ENCODE measurements at regions of chr11 and their contacts with region 1.

Region 1: DNA sequence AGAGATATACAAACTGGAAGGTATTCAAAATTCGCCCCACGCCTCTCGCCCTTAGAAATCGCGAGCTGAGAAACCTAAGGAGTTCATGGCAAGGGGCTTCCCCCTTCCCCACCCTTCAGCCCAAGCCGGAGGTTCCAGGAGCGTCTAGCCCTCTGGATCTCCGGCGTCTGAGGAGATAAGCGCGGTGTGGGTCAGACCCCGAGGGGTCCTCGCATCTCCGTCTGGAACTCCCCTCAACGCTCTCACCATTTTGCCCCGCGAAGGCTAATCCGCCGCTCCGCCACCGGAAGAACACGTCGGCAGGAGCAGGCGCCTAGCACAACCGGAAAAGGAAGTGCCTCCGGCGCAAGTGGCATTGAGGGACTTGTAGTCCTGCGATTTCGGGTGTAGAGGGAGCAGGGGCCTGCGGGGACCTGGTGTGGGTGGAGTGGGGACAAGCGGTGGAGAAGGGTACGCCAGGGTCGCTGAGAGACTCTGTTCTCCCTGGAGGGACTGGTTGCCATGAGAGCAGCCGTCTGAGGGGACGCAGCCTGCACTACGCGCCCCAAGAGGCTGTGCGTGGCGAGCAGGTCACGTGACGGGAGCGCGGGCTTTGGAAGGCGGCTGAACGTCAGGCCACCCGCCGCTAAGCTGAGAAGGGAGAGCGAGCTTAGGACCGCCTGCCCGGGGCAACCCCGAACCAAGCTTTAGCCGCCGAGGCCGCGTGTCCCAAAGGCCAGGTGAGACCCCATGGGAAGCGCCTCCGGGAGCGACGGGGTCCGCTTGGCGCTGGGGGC is at the starts of genes FEN1 and TMEM258:
- DNase-seq: peak; percentile 98
- H3K4me3 ChIP-seq: peak within 1 kb of the TSS; percentile 65 to 96 (median 81)
- H3K27ac ChIP-seq: peak within 1 kb of the TSS; percentile 92 to 99 (median 96)
- H3K4me1 ChIP-seq: peaks cover 10 to 73% (median 29%) of the 10 kb centered on the region in 6 donors
- H3K27me3 ChIP-seq: no peaks in the 10 kb centered on the region
- CTCF ChIP-seq: peak in 4 of 11 experiments; percentile 13 to 50 (median 42)
- POLR2A ChIP-seq: peak in 1 of 3 donors; percentile 11
- total RNA-seq, gene FEN1: 8.9 to 17.2 (median 14.8) TPM
- total RNA-seq, gene TMEM258: 52.4 to 85.2 (median 62.0) TPM

Region 2: DNA sequence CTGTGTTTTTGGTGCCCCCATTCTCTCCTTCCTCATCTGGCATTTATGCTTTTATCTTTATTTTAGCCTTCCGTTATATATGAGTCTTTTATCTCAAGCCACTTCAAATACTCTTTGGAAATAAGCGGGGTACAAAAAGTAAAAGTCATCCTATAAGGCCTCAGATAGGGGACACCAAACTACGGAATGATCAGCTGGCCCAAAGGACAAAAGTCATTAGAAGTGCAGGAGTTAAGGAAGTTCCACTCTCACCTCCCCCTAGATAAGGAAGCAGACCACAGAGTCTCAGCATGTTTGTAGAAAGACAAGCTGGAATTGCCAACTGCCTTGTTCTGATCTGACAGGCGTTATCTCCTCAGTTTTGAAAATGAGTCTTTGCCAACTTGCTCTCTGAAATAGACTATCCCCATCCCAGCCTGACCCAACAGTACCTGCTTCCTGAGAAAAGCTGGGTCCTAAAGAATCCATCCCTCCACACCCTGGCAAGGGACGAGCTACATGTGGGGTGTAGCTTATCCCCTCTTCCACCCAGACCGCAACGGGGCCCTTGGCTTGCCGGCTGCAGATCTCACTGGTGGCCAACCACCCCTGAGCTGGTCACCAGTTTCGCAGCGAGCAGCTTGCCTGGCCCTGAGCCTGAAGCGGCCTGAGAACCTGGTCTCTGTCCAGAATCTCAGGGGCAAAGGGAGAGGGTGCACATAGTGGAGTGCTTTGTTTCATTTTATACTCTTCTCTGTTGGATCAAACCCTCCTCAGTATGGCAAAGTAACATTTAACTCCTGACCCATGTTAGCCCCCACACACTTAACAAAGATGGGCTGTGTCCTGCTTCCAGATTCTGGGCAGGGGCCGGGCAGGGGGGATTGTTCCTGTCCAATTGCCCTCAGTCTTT is 49.4 kb after region 1 on chr11:
- intact Hi-C with region 1: no loop called
- DNase-seq: peak; percentile 45
- H3K4me3 ChIP-seq: no peak overlapping the region
- H3K27ac ChIP-seq: no peak overlapping the region
- H3K4me1 ChIP-seq: no peaks in the 10 kb centered on the region
- H3K27me3 ChIP-seq: no peaks in the 10 kb centered on the region
- CTCF ChIP-seq: no peak
- POLR2A ChIP-seq: no peak

Region 3: DNA sequence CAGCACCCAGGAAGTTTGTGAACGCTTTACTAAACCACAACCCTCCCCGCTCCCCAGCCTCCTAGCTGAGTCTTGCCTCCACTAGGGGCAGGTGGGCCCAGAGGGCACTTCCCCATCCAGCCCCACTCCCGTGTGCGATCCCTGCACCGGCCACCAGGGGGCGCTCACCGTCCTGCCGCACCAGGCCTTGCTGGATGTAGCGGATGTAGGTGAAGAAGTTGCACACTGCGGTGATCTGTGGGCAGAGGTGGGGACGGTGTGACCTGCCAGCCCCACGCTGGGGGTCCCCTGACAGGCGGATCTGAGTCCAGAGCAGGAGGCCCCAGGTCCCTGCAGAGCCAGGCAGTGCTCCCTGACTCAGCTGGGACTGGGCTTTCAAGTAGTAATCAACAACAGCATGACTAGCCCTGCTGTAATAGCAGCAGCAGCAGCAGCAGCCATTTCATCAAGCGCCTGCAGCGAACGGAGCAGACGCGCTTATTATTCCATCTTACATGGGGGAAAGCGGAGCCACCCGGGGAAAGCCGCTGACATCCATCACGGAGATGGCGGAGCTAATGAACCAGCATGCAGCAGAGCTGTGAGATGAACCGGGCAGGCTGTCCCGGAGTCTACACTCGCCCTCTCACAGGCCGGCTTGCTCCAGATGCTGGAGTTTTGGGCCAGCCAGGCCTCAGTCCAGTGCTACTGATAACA is 106.8 kb after region 1 on chr11:
- intact Hi-C with region 1: loop called (anchors 10 kb)
- DNase-seq: peak; percentile 100
- H3K4me3 ChIP-seq: peak overlapping the region in 1 of 8 donors; percentile 2
- H3K27ac ChIP-seq: peak overlapping the region in 4 of 8 donors; percentile 6 to 61 (median 52)
- H3K4me1 ChIP-seq: peaks cover 7 to 44% (median 22%) of the 10 kb centered on the region in 6 donors
- H3K27me3 ChIP-seq: peaks cover 0 to 4% (median 0%) of the 10 kb centered on the region in 7 donors
- CTCF ChIP-seq: peak; percentile 99 to 100 (median 100)
- POLR2A ChIP-seq: no peak

Region 4: GRCh38 chr11:61947486-61948210 is 155.2 kb after region 1 on chr11:
- intact Hi-C with region 1: loop called (anchors 10 kb)
- DNase-seq: peak; percentile 92
- H3K4me3 ChIP-seq: no peak overlapping the region
- H3K27ac ChIP-seq: peak overlapping the region in 1 of 8 donors; percentile 5
- H3K4me1 ChIP-seq: peaks cover 4 to 33% (median 16%) of the 10 kb centered on the region in 6 donors
- H3K27me3 ChIP-seq: no peaks in the 10 kb centered on the region
- CTCF ChIP-seq: peak; percentile 79 to 96 (median 89)
- POLR2A ChIP-seq: no peak

Region 5: DNA sequence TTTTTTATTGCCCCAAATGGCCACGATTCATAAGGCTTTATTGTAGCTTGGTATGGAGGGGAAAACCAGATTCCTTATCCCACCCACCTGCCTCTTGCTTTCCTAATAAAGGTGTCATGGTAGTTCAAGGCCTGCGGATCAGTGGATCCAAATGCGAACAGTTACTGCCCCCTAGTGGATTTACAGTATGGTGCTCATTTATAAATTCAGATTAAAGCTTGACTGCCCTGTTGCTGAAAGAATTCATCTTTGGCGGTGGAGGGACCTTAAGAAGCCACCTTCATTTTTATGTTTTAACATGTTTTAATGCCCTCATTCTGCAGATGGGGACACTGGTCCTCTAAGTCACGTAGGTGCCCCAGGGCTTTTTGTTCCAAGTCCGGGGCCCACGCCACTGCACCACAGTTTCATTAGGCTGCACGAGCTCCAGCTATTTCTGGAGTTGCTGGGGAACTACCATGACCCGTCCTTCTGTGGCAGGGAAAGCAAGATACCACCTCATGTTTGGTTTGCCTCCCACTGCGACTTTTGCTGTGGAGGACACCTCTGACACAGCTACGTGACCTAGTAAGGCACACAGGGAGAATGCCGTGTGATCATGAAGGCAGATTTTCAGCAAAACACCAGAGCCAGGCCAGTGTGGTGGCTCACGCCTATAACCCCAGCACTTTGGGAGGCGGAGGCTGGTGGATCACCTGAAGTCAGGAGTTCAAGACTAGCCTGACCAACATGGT is 315.7 kb after region 1 on chr11:
- intact Hi-C with region 1: loop called (anchors 5 kb)
- DNase-seq: no peak
- H3K4me3 ChIP-seq: no peak overlapping the region
- H3K27ac ChIP-seq: no peak overlapping the region
- H3K4me1 ChIP-seq: peaks cover 5 to 47% (median 30%) of the 10 kb centered on the region in 6 donors
- H3K27me3 ChIP-seq: no peaks in the 10 kb centered on the region
- CTCF ChIP-seq: peak in 10 of 11 experiments; percentile 51 to 84 (median 80)
- POLR2A ChIP-seq: no peak

Measured in spleen (tissue), 13 donors.